ENCODE measurements at regions of chr10 and their contacts with region 1.

Region 1: GRCh38 chr10:103192451-103193106 is 493 bp downstream of the NT5C2 start:
- DNase-seq: peak; percentile 65
- H3K4me3 Mint-ChIP-seq: peak overlapping the region; percentile 82
- H3K27ac Mint-ChIP-seq: peak overlapping the region; percentile 86
- H3K4me1 Mint-ChIP-seq: peaks cover 28% of the 10 kb centered on the region
- H3K27me3 Mint-ChIP-seq: no peaks in the 10 kb centered on the region
- CTCF ChIP-seq: no peak

Region 2: DNA sequence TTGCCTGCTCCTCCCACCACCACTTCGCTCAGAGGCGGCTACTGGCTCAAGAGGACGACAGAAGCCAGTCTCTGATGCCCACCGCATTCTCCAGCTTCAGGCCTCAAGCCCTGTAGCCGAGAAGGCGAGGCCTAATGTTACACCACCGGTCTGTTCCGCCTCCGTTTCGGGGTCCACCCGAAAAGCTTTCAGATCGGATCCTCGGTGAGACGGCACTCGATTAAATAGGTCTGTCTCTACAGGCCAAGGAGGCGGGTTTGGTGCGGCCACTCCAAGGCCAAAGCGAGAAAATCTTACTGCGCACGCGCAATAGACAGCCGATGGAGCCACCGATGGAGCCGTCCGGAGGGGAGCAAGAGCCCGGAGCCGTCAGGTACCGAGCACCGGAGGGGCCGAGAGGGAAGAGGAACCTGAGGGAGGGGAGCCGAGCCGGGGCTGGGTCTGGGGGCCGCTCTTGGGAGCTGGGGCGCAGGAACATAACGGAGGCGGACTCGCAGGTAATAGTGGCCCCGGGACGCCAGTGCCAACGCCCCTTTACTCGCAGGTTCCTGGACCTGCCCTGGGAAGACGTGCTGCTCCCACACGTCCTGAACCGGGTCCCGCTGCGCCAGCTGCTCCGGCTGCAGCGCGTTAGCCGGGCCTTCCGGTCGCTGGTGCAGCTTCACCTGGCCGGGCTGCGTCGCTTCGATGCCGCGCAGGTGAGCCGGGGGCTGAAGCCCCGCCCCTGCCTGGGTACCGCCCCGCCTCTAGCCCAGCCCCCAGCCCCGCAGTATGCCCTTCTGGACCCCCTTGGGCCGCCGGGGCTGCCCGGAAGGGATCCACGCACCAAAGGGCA is 771.6 kb before region 1 on chr10 and contains the start of gene FBXL15:
- CTCF ChIA-PET with region 1: no interaction called
- intact Hi-C with region 1: no loop called
- DNase-seq: peak; percentile 88
- H3K4me3 Mint-ChIP-seq: peak within 1 kb of the TSS; percentile 92
- H3K27ac Mint-ChIP-seq: peak within 1 kb of the TSS; percentile 80
- H3K4me1 Mint-ChIP-seq: peaks cover 3% of the 10 kb centered on the region
- H3K27me3 Mint-ChIP-seq: peaks cover 29% of the 10 kb centered on the region
- CTCF ChIP-seq: no peak
- total RNA-seq, gene FBXL15: 5.5 and 6.4 TPM in 2 replicates

Region 3: DNA sequence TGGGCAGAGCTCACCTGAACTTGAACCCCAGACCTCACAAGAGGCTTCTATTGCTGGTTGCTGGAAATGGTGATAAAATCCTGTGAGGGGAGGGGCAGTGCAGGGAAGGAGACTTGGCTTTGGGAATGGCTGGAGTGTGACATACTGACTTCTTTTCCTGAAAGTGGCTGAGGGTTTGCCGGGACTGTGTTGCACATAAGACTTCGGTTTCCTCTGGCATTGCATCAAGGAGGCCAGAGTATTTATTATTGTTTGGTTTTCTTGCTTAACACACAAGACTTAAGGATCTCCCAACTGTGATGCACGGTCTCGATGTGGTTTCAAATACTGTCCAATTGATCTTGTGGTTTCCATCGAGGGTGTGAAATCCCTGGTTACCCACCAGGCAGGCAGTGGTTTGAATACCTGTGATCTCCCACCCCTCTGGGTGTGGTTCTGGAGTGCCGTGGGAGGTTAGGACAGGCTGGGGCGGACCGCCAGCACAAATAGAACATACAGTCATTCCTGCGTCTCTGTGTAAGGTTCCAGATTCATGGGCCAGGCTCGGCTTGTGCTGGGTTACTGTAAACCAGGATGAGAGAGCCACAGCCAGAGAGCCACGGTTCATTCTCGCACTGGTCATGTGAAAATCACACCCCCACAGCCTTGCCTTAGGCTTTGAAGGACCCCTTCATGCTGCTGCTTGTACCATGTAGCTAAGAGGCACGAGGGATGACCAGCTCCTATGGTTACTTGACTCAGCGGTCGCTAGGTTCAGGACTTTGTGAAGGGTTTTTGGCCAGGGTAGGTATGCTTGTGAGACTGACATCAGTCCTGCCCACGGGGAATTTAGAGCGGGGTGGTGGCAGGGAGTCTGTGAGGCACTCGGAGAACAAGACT is 409.7 kb before region 1 on chr10:
- CTCF ChIA-PET with region 1: no interaction called
- intact Hi-C with region 1: no loop called
- DNase-seq: no peak
- H3K4me3 Mint-ChIP-seq: no peak overlapping the region
- H3K27ac Mint-ChIP-seq: no peak overlapping the region
- H3K4me1 Mint-ChIP-seq: peaks cover 8% of the 10 kb centered on the region
- H3K27me3 Mint-ChIP-seq: no peaks in the 10 kb centered on the region
- CTCF ChIP-seq: no peak

Region 4: GRCh38 chr10:103102195-103102594 is 90.4 kb before region 1 on chr10:
- CTCF ChIA-PET with region 1: no interaction called
- intact Hi-C with region 1: no loop called
- DNase-seq: no peak
- H3K4me3 Mint-ChIP-seq: no peak overlapping the region
- H3K27ac Mint-ChIP-seq: no peak overlapping the region
- H3K4me1 Mint-ChIP-seq: no peaks in the 10 kb centered on the region
- H3K27me3 Mint-ChIP-seq: no peaks in the 10 kb centered on the region
- CTCF ChIP-seq: no peak

Region 5: GRCh38 chr10:103231047-103231551 is 38.5 kb after region 1 on chr10:
- CTCF ChIA-PET with region 1: interaction called, 5 read pairs
- intact Hi-C with region 1: loop called (anchors 2 kb)
- DNase-seq: peak; percentile 41
- H3K4me3 Mint-ChIP-seq: no peak overlapping the region
- H3K27ac Mint-ChIP-seq: peak overlapping the region; percentile 54
- H3K4me1 Mint-ChIP-seq: peaks cover 24% of the 10 kb centered on the region
- H3K27me3 Mint-ChIP-seq: no peaks in the 10 kb centered on the region
- CTCF ChIP-seq: no peak

Region 6: GRCh38 chr10:103238506-103239252 is 46.1 kb after region 1 on chr10:
- CTCF ChIA-PET with region 1: interaction called, 18 read pairs
- intact Hi-C with region 1: loop called (anchors 2 kb)
- DNase-seq: peak; percentile 80
- H3K4me3 Mint-ChIP-seq: peak overlapping the region; percentile 60
- H3K27ac Mint-ChIP-seq: peak overlapping the region; percentile 100
- H3K4me1 Mint-ChIP-seq: peaks cover 26% of the 10 kb centered on the region
- H3K27me3 Mint-ChIP-seq: no peaks in the 10 kb centered on the region
- CTCF ChIP-seq: peak; percentile 41

Measured in Calu3 (cell line).